ENCODE measurements at regions of chr18 and their contacts with region 1.

Region 1: GRCh38 chr18:2223849-2224248 is 347.5 kb downstream of the METTL4 start:
- DNase-seq: peak; percentile 24
- H3K4me3 Mint-ChIP-seq: no peak overlapping the region
- H3K27ac Mint-ChIP-seq: no peak overlapping the region
- H3K4me1 Mint-ChIP-seq: no peaks in the 10 kb centered on the region
- H3K27me3 Mint-ChIP-seq: peaks cover 4% of the 10 kb centered on the region

Region 2: DNA sequence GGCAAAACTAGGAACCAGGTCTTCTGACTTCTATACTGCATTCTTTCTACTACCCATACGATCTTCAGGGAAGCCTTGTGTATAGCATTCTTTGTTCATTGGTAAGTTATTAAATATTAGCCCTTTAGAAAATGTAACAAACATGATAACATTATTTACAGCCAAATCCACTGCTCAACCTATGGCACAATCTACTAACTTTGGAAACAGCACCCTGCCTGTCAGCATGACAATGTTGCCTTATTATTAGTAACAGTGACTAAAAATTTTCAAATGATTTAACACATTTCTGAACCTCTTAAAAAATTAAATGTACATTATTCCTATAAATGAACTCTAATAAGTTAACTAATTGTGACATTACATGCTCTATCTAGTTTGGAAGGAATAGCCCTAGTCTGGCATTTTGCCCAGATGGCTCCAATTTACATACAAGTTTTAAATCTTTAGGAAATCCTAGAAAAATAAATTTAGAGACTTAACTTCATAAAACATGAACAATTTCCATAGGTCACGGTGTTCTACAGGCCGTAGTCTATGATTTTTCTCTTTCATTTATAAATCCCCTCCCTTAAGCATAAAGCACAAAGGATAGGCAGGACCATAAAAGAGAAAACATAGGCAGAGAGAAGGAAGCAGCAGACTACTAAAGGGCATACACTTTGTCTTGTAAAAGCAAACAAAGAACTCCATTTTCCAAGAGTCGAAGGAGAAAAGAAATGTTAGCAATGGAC is 1445.5 kb before region 1 on chr18:
- CTCF ChIA-PET with region 1: no interaction called
- intact Hi-C with region 1: loop called (anchors 5 kb)
- DNase-seq: no peak
- H3K4me3 Mint-ChIP-seq: no peak overlapping the region
- H3K27ac Mint-ChIP-seq: no peak overlapping the region
- H3K4me1 Mint-ChIP-seq: peaks cover 16% of the 10 kb centered on the region
- H3K27me3 Mint-ChIP-seq: no peaks in the 10 kb centered on the region

Region 3: DNA sequence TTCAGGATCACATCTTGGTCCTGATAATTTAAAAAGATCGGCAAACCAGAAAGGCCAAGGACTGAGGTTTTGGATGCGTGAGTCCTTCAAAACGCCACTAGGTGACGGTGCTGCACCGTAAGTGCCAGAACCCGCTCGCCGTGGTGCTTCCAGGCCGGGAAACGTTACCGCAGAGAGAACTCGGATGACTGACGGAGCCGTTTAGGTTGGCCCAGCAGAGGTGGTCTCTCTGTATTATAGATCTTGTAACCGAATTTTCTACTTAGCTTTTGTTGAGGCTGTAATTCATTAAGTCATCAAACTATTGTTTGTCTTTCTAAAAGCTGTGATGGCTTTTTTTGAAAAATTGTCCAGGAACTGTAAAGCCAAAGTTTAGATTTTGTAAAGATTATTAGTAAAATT is 1359.0 kb before region 1 on chr18:
- CTCF ChIA-PET with region 1: interaction called, 5 read pairs
- intact Hi-C with region 1: loop called (anchors 5 kb)
- DNase-seq: peak; percentile 79
- H3K4me3 Mint-ChIP-seq: no peak overlapping the region
- H3K27ac Mint-ChIP-seq: no peak overlapping the region
- H3K4me1 Mint-ChIP-seq: peaks cover 2% of the 10 kb centered on the region
- H3K27me3 Mint-ChIP-seq: peaks cover 9% of the 10 kb centered on the region

Region 4: GRCh38 chr18:1585879-1586488 is 637.9 kb before region 1 on chr18:
- CTCF ChIA-PET with region 1: interaction called, 3 read pairs
- intact Hi-C with region 1: loop called (anchors 5 kb)
- DNase-seq: no peak
- H3K4me3 Mint-ChIP-seq: no peak overlapping the region
- H3K27ac Mint-ChIP-seq: no peak overlapping the region
- H3K4me1 Mint-ChIP-seq: no peaks in the 10 kb centered on the region
- H3K27me3 Mint-ChIP-seq: peaks cover 13% of the 10 kb centered on the region

Region 5: DNA sequence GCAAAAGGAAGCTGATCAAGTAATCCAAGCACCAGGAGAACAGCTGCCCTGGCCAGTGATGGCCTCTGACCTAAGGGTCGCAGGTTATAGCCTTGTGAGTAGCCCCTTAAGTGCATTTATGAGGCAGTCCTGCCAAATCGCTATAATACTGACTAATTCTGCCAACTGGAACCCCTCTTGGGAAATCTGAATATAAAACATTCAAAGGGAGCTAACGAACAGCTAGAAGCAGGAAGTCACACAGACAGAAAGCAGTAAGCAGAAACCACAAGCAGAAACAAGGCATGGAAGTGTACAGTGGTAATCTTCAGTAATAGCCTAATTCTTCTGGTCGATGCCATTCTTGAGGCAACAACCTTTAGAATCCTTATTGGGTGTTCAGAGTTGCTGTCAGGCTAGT is 173.9 kb before region 1 on chr18:
- CTCF ChIA-PET with region 1: no interaction called
- intact Hi-C with region 1: no loop called
- DNase-seq: no peak
- H3K4me3 Mint-ChIP-seq: no peak overlapping the region
- H3K27ac Mint-ChIP-seq: no peak overlapping the region
- H3K4me1 Mint-ChIP-seq: no peaks in the 10 kb centered on the region
- H3K27me3 Mint-ChIP-seq: no peaks in the 10 kb centered on the region

Region 6: DNA sequence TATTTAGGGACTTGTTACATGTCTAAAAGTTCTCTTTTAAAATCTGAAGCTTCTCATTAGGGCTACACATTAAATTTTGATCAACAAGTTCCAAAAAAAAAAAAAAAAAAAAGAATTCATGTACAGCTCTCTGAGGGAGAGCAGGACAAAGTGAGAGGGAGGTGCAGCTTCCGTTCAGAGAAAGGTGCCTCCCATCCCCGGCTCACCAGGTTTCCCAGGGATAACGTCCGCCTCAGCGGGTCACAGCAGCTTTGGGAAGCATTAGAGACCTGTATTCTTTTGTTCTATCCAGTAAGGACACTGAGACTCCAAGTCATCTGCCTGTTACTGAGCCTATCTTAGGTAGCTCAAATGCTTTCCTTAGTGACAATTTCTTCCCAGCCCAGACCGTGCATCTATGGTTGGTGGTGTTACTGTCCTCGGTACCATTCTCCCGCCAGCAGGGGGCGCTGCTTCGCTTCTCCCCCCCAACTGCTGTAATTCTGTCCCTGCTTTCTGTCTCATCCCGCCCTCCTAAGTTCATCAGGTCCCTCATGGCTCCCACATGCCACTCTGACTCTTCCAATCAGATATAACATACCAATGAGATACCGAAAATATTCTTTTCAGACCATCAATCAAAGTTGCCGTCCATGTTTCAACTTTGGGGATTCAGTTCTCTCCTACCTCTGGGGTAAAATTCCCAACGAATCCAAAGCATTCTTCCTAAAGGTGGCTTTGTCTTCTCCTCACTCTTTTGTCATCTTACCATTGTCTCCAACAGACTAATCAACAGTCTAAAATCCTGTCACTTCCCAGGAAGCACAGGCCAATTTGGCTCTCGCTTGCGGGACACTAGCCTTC is 119.0 kb before region 1 on chr18:
- CTCF ChIA-PET with region 1: interaction called, 3 read pairs
- intact Hi-C with region 1: loop called (anchors 2 kb)
- DNase-seq: peak; percentile 61
- H3K4me3 Mint-ChIP-seq: no peak overlapping the region
- H3K27ac Mint-ChIP-seq: no peak overlapping the region
- H3K4me1 Mint-ChIP-seq: no peaks in the 10 kb centered on the region
- H3K27me3 Mint-ChIP-seq: peaks cover 5% of the 10 kb centered on the region

Measured in activated naive CD4-positive, alpha-beta T cell treated with anti-CD3 and anti-CD28 coated beads for 36 hours (primary cell).